HCT116 (cell line): ENCODE measurements at regions of chr5 and their contacts with region 1.

Region 1: GRCh38 chr5:71522151-71522550 is 65.0 kb upstream of the MCCC2 start:
- DNase-seq: no peak
- ATAC-seq: no peak
- H3K4me3 ChIP-seq: no peak overlapping the region
- H3K27ac ChIP-seq: no peak overlapping the region
- H3K4me1 ChIP-seq: no peaks in the 10 kb centered on the region
- H3K27me3 ChIP-seq: no peaks in the 10 kb centered on the region
- CTCF ChIP-seq: no peak
- POLR2A ChIP-seq: no peak
- RAD21 ChIP-seq: no peak

Region 2: DNA sequence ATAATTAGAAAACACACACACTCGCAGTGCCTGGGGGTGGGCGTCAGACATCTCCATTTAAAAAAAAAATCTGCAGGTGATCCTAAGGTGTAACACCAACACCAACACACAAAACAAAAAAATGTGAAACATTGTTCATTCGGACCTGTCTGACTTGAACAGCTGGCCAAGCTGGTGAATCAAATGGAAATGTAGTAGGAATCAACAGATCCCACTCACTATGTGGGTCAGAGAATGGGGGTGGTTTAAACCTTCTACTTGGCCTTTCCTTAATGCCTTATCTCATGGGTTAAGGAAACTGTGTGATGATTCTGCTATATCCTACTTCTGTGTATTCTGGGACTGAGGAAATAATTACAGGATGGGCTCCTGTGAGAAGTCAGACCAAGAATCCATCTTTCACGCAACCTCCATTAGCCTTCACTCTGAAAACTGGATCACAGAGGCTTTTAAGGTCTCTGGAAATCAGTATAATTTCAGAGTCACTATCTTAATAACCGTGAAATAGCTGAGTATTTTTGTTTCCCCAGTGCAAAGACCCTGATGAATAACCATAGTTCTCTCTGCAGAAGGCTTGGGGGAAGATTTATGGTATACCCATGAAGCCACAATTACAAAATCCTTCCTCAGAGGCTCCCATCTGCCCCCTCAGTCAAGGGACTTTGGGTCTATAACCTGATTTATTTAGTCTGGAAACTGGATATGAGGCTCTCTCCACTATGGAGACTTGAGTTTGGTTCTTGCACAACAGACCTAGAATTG is 47.8 kb after region 1 on chr5:
- CTCF ChIA-PET with region 1: no interaction called
- POLR2A ChIA-PET with region 1: no interaction called
- RAD21 ChIA-PET with region 1: no interaction called
- intact Hi-C with region 1: loop called (anchors 10 kb)
- DNase-seq: no peak
- ATAC-seq: no peak
- H3K4me3 ChIP-seq: no peak overlapping the region
- H3K27ac ChIP-seq: no peak overlapping the region
- H3K4me1 ChIP-seq: no peaks in the 10 kb centered on the region
- H3K27me3 ChIP-seq: no peaks in the 10 kb centered on the region
- CTCF ChIP-seq: no peak
- POLR2A ChIP-seq: no peak
- RAD21 ChIP-seq: no peak

Region 3: DNA sequence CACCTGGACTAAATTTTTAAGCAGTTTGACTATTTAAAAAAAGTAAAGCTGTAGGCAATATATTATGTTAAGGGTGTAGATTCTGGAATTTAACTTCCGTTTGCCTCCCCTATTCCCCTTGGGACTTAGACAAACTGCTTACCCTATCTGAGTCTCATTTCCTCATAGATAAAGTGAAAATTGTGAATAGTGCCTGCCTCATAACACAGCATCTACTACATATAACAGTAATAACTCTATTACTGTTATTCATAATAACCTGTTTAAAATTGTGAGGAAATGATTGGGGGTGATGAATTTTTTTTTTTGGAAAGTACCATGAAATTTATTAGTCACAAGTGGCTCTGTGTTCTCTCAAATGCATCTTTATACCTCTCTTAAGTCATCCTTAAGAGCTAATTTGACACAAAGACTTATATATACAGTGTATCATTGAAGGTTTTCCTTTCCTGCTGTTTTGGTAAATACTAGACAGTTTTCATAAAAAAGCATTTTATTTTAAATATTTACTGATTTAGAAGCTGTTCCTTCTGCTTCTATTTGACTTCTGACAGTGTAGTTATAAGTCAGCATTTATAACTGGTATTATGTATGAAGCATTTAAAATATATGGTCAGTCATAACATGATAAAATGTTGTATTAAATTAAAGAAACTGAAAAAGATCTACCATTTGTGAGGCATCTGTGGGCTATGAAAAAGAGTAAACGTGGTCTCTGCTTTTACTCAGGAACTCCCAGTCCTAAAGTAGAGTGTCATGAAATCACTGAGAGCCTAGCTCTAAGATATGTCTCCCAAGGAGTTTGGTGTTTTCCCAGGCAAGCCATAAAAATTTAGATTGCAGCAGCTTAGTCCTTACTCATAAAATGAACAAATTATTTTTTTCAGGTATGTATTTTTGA is 111.4 kb after region 1 on chr5:
- CTCF ChIA-PET with region 1: no interaction called
- POLR2A ChIA-PET with region 1: no interaction called
- RAD21 ChIA-PET with region 1: no interaction called
- intact Hi-C with region 1: no loop called
- DNase-seq: no peak
- ATAC-seq: no peak
- H3K4me3 ChIP-seq: no peak overlapping the region
- H3K27ac ChIP-seq: no peak overlapping the region
- H3K4me1 ChIP-seq: no peaks in the 10 kb centered on the region
- H3K27me3 ChIP-seq: no peaks in the 10 kb centered on the region
- CTCF ChIP-seq: no peak
- POLR2A ChIP-seq: no peak
- RAD21 ChIP-seq: no peak